Activated CD8-positive, alpha-beta T cell treated with anti-CD3 and anti-CD28 coated beads for 36 hours (primary cell): ENCODE measurements at regions of chr11 and their contacts with region 1.

Region 1: GRCh38 chr11:111601979-111602864 is at the start of gene SIK2:
- DNase-seq: peak; percentile 94
- ATAC-seq: peak; percentile 93
- H3K4me3 Mint-ChIP-seq: peak within 1 kb of the TSS; percentile 92
- H3K27ac Mint-ChIP-seq: peak within 1 kb of the TSS; percentile 93
- H3K4me1 Mint-ChIP-seq: peaks cover 28% of the 10 kb centered on the region
- H3K27me3 Mint-ChIP-seq: no peaks in the 10 kb centered on the region
- CTCF ChIP-seq: peak; percentile 74
- total RNA-seq, gene SIK2: 7.4 to 8.0 TPM

Region 2: GRCh38 chr11:111490496-111490895 is 111.7 kb before region 1 on chr11:
- CTCF ChIA-PET with region 1: no interaction called
- POLR2A ChIA-PET with region 1: no interaction called
- intact Hi-C with region 1: no loop called
- DNase-seq: no peak
- ATAC-seq: no peak
- H3K4me3 Mint-ChIP-seq: no peak overlapping the region
- H3K27ac Mint-ChIP-seq: no peak overlapping the region
- H3K4me1 Mint-ChIP-seq: no peaks in the 10 kb centered on the region
- H3K27me3 Mint-ChIP-seq: peaks cover 11% of the 10 kb centered on the region
- CTCF ChIP-seq: no peak

Region 3: DNA sequence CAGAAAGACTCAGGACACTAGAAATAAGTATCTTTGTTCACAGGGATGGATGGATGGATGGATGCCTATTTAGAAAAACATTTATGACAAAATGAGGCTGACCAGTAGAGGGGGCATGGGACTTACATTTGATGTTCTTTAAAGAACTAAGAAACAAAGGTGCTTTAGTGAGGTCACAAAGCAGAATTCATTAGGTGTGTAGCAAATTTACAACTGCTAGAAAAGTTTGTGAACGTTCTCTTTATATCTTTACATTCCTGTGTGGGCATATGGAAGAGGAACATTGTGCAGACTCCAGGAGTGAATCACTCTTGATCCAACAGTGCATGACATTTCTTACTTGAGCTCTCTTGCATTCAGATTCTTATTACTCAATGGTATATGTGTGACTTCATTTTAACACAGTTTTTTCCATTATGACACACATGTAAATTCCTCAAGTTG is 15.8 kb before region 1 on chr11:
- CTCF ChIA-PET with region 1: interaction called, 20 read pairs
- POLR2A ChIA-PET with region 1: no interaction called
- intact Hi-C with region 1: no loop called
- DNase-seq: peak; percentile 74
- ATAC-seq: peak; percentile 70
- H3K4me3 Mint-ChIP-seq: no peak overlapping the region
- H3K27ac Mint-ChIP-seq: no peak overlapping the region
- H3K4me1 Mint-ChIP-seq: peaks cover 2% of the 10 kb centered on the region
- H3K27me3 Mint-ChIP-seq: peaks cover 3% of the 10 kb centered on the region
- CTCF ChIP-seq: peak; percentile 49

Region 4: DNA sequence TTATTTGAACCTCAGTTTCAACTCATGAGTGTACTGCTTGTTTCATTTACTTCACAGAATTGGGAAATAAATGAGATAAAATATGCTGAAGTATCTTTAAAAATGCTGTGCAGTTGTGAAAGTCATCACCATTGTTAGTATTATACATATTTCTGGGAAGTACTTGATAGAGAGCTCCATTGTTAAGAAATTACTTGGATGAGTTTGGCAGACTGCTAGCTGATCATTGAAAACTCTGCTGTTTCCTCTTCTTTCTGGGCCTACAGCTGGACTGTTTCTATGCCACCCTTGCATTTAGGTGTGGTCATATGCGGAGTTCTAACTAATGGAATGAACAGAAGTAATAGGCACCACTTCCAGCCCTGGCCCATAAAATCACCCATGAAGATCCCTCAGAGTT is 10.0 kb after region 1 on chr11:
- CTCF ChIA-PET with region 1: interaction called, 12 read pairs
- POLR2A ChIA-PET with region 1: no interaction called
- intact Hi-C with region 1: no loop called
- DNase-seq: no peak
- ATAC-seq: no peak
- H3K4me3 Mint-ChIP-seq: no peak overlapping the region
- H3K27ac Mint-ChIP-seq: no peak overlapping the region
- H3K4me1 Mint-ChIP-seq: peaks cover 10% of the 10 kb centered on the region
- H3K27me3 Mint-ChIP-seq: no peaks in the 10 kb centered on the region
- CTCF ChIP-seq: no peak

Region 5: GRCh38 chr11:111620518-111620917 is 18.3 kb after region 1 on chr11:
- CTCF ChIA-PET with region 1: interaction called, 13 read pairs
- POLR2A ChIA-PET with region 1: no interaction called
- intact Hi-C with region 1: no loop called
- DNase-seq: no peak
- ATAC-seq: no peak
- H3K4me3 Mint-ChIP-seq: no peak overlapping the region
- H3K27ac Mint-ChIP-seq: no peak overlapping the region
- H3K4me1 Mint-ChIP-seq: no peaks in the 10 kb centered on the region
- H3K27me3 Mint-ChIP-seq: no peaks in the 10 kb centered on the region
- CTCF ChIP-seq: no peak

Region 6: GRCh38 chr11:111745719-111746504 is 143.7 kb after region 1 on chr11:
- CTCF ChIA-PET with region 1: no interaction called
- POLR2A ChIA-PET with region 1: no interaction called
- intact Hi-C with region 1: no loop called
- DNase-seq: no peak
- ATAC-seq: no peak
- H3K4me3 Mint-ChIP-seq: no peak overlapping the region
- H3K27ac Mint-ChIP-seq: no peak overlapping the region
- H3K4me1 Mint-ChIP-seq: no peaks in the 10 kb centered on the region
- H3K27me3 Mint-ChIP-seq: no peaks in the 10 kb centered on the region
- CTCF ChIP-seq: no peak

Region 7: DNA sequence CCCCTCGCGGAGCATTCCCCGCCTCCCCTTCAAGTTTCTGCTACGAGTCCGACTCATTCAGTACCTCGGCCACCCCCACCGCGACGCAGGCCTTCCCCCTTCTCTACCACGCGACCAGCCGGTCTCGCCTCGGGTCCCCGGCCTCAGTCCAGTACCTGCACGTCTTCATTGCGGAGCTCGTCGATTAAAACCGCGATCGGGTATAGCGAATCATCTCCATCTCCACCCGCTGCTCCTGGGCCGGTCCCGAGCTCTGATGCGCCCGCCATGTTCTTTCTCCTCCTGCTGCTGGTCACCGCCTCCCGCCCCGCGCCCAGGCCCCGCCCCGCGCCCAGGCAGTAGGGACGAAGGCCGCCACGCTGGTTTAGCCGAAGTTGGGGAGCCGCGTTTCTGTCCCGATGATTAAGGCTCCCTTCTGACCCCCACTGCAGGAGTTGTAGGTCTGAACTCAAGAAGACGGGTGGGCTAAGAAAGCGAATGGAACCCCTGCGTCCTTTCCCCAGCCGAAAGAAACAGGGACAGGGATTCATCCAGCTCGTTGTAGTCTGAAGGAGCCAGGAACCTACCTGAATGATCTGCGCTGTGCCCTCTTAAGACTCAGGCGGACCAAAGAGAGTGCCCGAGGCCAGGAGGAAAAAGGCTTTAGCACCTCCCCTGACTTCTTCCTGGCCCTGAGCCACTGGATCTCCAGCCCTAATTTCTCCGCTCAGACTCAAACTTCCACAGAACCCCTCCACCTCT is 164.0 kb after region 1 on chr11 and contains the start of gene PPP2R1B:
- CTCF ChIA-PET with region 1: interaction called, 31 read pairs
- POLR2A ChIA-PET with region 1: interaction called, 5 read pairs
- intact Hi-C with region 1: no loop called
- DNase-seq: peak; percentile 80
- ATAC-seq: peak; percentile 99
- H3K4me3 Mint-ChIP-seq: peak within 1 kb of the TSS; percentile 99
- H3K27ac Mint-ChIP-seq: peak within 1 kb of the TSS; percentile 98
- H3K4me1 Mint-ChIP-seq: peaks cover 30% of the 10 kb centered on the region
- H3K27me3 Mint-ChIP-seq: no peaks in the 10 kb centered on the region
- CTCF ChIP-seq: no peak
- total RNA-seq, gene PPP2R1B: 49.7 to 54.0 TPM